ENCODE measurements at regions of chr6 and their contacts with region 1.

Region 1: DNA sequence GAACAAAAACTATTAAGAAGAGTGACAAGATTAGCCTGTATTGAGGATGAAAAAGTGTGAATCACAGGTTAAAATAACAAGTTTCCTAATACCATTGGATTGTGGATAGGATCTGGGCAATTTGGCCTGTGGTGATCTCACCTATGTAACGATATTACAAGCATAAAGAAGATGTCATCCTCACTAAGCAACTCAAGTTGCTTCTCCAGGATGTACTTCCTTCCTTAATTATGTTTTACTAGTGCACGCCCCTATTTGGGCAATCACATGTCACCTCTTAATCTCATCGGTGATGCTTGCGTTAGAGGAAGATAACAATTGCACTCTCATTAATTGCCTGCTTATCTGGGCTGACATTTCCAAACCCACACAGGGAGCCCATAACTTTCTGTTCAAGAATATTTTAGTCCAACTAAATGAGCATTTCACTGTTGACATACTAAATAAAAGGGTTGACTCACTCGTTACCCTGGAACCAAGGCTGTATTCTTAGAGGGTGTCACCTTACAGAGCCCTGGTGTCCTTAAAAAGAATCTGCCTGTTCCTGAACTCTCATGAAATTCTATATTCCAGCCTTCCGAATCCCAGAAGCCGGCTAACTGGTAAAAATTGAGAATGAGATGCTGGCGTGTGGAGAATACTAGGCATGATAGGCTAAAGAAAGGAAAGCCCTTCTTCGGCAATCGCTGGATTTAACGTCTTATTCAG is 88.2 kb upstream of the ATXN1 start:
- DNase-seq: peak; percentile 53
- H3K4me3 ChIP-seq: no peak overlapping the region
- H3K27ac ChIP-seq: peak overlapping the region; percentile 46 to 52
- H3K4me1 ChIP-seq: peaks cover 3% of the 10 kb centered on the region
- H3K27me3 ChIP-seq: no peaks in the 10 kb centered on the region
- CTCF ChIP-seq: peak in 1 of 4 experiments; percentile 9
- POLR2A ChIP-seq: no peak

Region 2: DNA sequence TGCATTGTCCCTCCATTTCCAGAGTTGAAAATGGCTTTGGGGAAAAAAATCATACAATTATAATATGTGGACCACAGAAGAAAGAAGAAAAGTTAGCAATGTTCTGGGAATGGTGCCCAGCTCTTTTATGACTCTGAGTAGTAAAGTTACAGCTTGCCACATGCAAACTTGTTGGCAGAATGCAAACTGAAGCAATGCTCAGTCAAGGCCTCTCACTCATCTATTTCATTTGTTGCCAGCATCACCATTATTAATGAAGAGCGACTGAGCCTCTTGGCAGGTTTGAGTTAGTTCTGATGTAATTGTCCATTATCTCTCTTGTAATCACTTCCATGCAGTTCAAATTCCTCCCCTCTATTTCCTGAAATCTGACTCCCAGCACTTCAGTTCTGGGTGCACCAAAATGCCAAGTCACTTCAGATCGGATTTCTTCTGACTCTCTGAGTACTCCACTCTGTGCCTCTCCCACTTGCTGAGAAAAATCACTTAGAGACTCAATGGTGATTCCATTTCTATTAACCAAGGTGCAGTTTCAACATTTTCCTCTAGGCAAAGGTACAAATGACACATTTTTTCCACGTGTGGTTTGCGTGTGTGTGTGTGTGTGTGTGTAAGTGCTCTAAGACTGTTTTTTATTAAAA is 98.1 kb after region 1 on chr6:
- intact Hi-C with region 1: loop called (anchors 5 kb)
- DNase-seq: peak; percentile 83
- H3K4me3 ChIP-seq: no peak overlapping the region
- H3K27ac ChIP-seq: no peak overlapping the region
- H3K4me1 ChIP-seq: no peaks in the 10 kb centered on the region
- H3K27me3 ChIP-seq: no peaks in the 10 kb centered on the region
- CTCF ChIP-seq: peak in 1 of 4 experiments; percentile 5
- POLR2A ChIP-seq: no peak

Measured in prostate gland (tissue), 2 donors.